MCF 10A (cell line): ENCODE measurements at regions of chr10 and their contacts with region 1.

Region 1: GRCh38 chr10:88932539-88933256 is 19.9 kb downstream of the ACTA2 start:
- DNase-seq: peak; percentile 91
- H3K4me3 Mint-ChIP-seq: no peak overlapping the region
- H3K27ac Mint-ChIP-seq: peak overlapping the region; percentile 64
- H3K4me1 Mint-ChIP-seq: peaks cover 25% of the 10 kb centered on the region
- H3K27me3 Mint-ChIP-seq: no peaks in the 10 kb centered on the region
- CTCF ChIP-seq: peak; percentile 77

Region 2: GRCh38 chr10:88763441-88763840 is 169.3 kb before region 1 on chr10:
- CTCF ChIA-PET with region 1: no interaction called
- POLR2A ChIA-PET with region 1: no interaction called
- intact Hi-C with region 1: no loop called
- DNase-seq: no peak
- H3K4me3 Mint-ChIP-seq: no peak overlapping the region
- H3K27ac Mint-ChIP-seq: no peak overlapping the region
- H3K4me1 Mint-ChIP-seq: no peaks in the 10 kb centered on the region
- H3K27me3 Mint-ChIP-seq: no peaks in the 10 kb centered on the region
- CTCF ChIP-seq: no peak

Region 3: DNA sequence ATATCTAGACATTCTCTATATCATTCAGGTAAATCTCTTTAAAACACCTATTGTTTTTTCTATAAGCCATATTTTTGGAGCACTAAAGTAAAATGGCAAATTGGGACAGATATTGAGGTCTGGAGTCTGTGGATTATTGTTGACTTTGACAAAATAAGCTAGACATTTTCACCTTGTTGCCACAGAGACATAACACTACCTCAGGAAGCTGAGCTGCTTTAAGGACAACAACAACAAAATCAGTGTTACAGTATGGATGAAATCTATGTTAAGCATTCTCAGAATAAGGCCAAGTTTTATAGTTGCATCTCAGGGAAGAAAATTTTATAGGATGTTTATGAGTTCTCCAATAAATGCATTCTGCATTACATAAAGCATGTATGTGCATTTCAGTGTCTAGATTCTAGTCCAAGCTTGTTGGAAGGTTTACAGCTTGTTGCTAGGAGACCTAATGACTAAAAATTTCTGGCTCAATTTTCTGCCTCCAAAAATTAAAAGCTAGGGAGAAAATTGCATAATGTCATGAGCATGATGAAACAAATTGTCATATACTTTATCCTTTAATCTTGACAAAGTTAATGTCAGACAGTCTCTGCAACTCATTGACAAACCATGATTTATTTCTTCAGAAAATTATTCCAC is 111.8 kb before region 1 on chr10:
- CTCF ChIA-PET with region 1: interaction called, 588 read pairs
- POLR2A ChIA-PET with region 1: interaction called, 11 read pairs
- intact Hi-C with region 1: no loop called
- DNase-seq: peak; percentile 85
- H3K4me3 Mint-ChIP-seq: no peak overlapping the region
- H3K27ac Mint-ChIP-seq: peak overlapping the region; percentile 96
- H3K4me1 Mint-ChIP-seq: peaks cover 17% of the 10 kb centered on the region
- H3K27me3 Mint-ChIP-seq: no peaks in the 10 kb centered on the region
- CTCF ChIP-seq: no peak

Region 4: DNA sequence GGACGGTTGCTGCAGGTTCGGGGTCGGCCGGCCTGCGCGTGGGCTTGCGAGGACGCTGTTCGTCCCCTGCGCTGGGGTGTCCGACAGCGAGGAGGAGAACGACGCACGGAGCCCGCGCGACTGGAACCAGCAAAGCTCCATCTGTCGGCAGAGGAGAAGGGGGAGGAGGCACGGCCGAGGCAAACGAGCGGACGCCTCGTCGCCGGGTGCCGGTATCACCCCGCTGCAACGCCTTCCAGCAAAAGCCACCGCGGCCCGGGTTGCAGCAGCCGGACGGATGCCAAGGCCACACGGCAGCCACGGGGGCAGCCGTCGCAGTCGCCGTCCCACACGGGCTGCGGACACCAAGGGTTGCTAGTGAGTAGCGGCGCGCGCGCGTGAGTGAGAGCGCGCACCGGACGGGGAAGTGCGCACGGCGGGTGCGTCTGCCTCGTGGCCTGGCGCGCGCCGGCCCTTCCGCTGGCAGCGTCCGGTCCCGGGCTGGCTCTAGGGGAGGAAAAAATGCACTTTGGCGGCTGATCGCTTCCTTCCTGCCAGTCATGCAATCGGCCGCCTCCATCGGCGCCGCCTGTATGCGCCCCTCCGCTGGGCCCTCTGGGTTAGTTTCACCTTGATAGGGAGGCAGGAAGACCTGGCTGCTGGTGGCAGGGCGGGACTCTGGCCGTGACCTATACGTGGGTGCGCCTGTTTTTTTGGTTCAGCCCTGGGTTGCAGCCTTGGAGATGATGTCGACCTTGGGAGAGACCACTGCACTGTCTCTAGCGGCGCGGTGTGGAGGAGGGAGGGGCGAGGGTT is 52.2 kb before region 1 on chr10:
- CTCF ChIA-PET with region 1: interaction called, 17 read pairs
- POLR2A ChIA-PET with region 1: interaction called, 23 read pairs
- intact Hi-C with region 1: loop called (anchors 2 kb)
- DNase-seq: peak; percentile 84
- H3K4me3 Mint-ChIP-seq: peak overlapping the region; percentile 97
- H3K27ac Mint-ChIP-seq: peak overlapping the region; percentile 91
- H3K4me1 Mint-ChIP-seq: peaks cover 29% of the 10 kb centered on the region
- H3K27me3 Mint-ChIP-seq: no peaks in the 10 kb centered on the region
- CTCF ChIP-seq: no peak

Region 5: DNA sequence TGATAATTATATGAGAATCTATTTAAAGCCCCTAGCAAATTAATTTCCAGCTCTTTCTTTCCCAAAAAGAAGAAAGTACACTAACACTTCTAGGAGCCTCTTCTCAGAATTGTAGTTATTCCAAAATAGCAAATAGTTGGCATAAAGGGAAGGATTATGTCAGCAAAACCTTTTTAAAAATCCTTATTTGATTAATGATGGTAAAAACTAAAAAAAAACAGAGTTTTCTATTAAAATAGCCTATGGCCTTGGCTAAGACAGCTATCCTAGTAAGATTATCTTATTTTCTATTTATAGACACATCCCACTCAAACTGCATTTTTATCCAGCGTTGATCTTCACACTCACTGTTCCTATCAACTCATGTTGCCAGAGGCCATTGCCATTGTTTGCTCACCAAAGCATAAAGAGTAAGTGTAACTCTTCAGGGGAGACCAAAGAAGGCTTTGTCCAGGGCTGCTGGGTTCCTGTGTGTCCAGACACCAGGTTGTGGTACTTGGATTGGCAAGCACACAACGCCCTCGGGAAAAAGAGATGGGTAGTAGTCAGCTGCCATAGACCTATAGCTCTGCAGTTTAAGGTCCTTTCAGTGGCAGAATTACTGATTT is 11.6 kb before region 1 on chr10:
- CTCF ChIA-PET with region 1: interaction called, 21 read pairs
- POLR2A ChIA-PET with region 1: interaction called, 7 read pairs
- intact Hi-C with region 1: no loop called
- DNase-seq: no peak
- H3K4me3 Mint-ChIP-seq: no peak overlapping the region
- H3K27ac Mint-ChIP-seq: no peak overlapping the region
- H3K4me1 Mint-ChIP-seq: peaks cover 12% of the 10 kb centered on the region
- H3K27me3 Mint-ChIP-seq: no peaks in the 10 kb centered on the region
- CTCF ChIP-seq: no peak

Region 6: DNA sequence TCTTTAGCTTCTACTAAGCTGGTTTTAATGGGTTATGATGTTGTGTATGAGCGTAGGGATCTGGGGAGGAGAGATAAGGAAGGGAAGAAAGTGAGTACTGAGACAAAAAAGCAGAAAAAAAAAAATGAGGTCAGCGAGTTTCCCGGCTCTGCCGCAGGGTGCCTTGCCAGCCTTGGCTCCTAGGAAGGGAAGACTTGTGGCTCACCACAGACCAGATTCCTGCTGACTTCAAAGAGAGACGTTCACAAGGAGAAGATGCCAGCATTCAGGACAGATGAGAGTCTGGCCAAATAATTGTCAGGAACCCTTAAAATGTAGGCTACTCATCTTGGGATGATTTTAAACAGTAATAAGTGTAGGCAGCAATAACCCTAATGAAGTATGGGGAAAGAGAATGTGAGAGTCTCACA is 46.5 kb after region 1 on chr10:
- CTCF ChIA-PET with region 1: interaction called, 33 read pairs
- POLR2A ChIA-PET with region 1: interaction called, 3 read pairs
- intact Hi-C with region 1: no loop called
- DNase-seq: peak; percentile 67
- H3K4me3 Mint-ChIP-seq: no peak overlapping the region
- H3K27ac Mint-ChIP-seq: peak overlapping the region; percentile 68
- H3K4me1 Mint-ChIP-seq: peaks cover 14% of the 10 kb centered on the region
- H3K27me3 Mint-ChIP-seq: no peaks in the 10 kb centered on the region
- CTCF ChIP-seq: no peak

Region 7: GRCh38 chr10:89207181-89207800 is 274.6 kb after region 1 on chr10 and contains the start of gene CH25H:
- CTCF ChIA-PET with region 1: interaction called, 13 read pairs
- POLR2A ChIA-PET with region 1: no interaction called
- intact Hi-C with region 1: no loop called
- DNase-seq: peak; percentile 69
- H3K4me3 Mint-ChIP-seq: peak within 1 kb of the TSS; percentile 62
- H3K27ac Mint-ChIP-seq: no peak within 1 kb of the TSS
- H3K4me1 Mint-ChIP-seq: peaks cover 6% of the 10 kb centered on the region
- H3K27me3 Mint-ChIP-seq: no peaks in the 10 kb centered on the region
- CTCF ChIP-seq: no peak
- total RNA-seq, gene CH25H: not detected in 2 replicates